Esophagus muscularis mucosa (tissue), 4 donors: ENCODE measurements at regions of chr16 and their contacts with region 1.

Region 1: DNA sequence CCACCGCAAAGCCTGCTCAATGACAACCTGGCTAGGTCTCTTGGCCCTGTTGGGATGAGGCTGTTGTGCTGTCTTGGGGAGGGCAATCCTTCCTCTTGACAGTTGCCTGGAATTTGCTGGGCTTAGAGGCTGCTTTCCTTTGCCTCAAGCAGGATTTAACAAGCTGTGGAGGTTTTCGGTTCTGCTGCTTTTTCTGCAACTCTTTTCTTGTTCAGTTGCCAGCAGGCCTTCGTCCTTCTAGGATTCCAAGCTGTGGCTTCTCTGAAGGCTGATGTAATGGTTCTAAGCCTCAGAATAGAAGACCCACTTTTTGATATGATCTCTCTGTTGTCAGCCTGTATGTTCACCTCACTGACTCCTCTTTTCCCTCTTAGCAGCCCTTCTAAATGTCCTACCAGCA is 149.5 kb upstream of the HS3ST4 start:
- DNase-seq: peak; percentile 29
- H3K4me3 ChIP-seq: no peak overlapping the region
- H3K27ac ChIP-seq: no peak overlapping the region
- H3K4me1 ChIP-seq: no peaks in the 10 kb centered on the region
- H3K27me3 ChIP-seq: no peaks in the 10 kb centered on the region
- CTCF ChIP-seq: no peak
- EP300 ChIP-seq: no peak
- POLR2A ChIP-seq: no peak

Region 2: DNA sequence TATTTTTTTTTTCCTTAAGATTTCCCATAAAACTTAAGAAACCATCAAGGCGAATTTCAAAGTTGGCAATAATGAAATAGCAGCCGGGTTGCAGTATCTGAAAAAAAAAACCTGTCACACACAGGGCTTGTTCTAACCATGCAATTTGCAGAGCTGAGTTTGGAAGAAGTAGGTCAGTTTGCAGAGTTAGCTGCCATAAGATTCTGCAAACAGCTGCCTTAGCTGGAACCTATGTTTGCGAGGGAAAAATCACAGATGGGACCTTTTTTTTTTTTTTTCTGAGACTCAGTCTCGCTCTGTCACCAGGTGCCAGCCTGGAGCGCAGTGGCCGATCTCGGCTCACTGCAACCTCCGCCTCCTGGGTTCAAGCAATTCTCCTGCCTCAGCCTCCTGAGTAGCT is 51.0 kb after region 1 on chr16:
- intact Hi-C with region 1: loop called (anchors 10 kb)
- DNase-seq: no peak
- H3K4me3 ChIP-seq: no peak overlapping the region
- H3K27ac ChIP-seq: no peak overlapping the region
- H3K4me1 ChIP-seq: no peaks in the 10 kb centered on the region
- H3K27me3 ChIP-seq: no peaks in the 10 kb centered on the region
- CTCF ChIP-seq: no peak
- EP300 ChIP-seq: no peak
- POLR2A ChIP-seq: no peak